ENCODE measurements at regions of chr12 and their contacts with region 1.

Region 1: GRCh38 chr12:55738123-55739024 is 4.5 kb upstream of the GDF11 start:
- DNase-seq: peak; percentile 89 to 94 (median 93)
- ATAC-seq: peak; percentile 83
- H3K4me3 ChIP-seq: peak overlapping the region; percentile 75
- H3K27ac ChIP-seq: peak overlapping the region; percentile 68
- H3K4me1 ChIP-seq: no peaks in the 10 kb centered on the region
- H3K27me3 ChIP-seq: no peaks in the 10 kb centered on the region

Region 2: GRCh38 chr12:55797068-55797467 is 58.7 kb after region 1 on chr12:
- intact Hi-C with region 1: loop called in 3 of 4 experiments (anchors 10 kb)
- DNase-seq: no peak
- ATAC-seq: peak in 1 of 2 donors; percentile 51
- H3K4me3 ChIP-seq: no peak overlapping the region
- H3K27ac ChIP-seq: no peak overlapping the region
- H3K4me1 ChIP-seq: peaks cover 1% of the 10 kb centered on the region
- H3K27me3 ChIP-seq: no peaks in the 10 kb centered on the region

Region 3: DNA sequence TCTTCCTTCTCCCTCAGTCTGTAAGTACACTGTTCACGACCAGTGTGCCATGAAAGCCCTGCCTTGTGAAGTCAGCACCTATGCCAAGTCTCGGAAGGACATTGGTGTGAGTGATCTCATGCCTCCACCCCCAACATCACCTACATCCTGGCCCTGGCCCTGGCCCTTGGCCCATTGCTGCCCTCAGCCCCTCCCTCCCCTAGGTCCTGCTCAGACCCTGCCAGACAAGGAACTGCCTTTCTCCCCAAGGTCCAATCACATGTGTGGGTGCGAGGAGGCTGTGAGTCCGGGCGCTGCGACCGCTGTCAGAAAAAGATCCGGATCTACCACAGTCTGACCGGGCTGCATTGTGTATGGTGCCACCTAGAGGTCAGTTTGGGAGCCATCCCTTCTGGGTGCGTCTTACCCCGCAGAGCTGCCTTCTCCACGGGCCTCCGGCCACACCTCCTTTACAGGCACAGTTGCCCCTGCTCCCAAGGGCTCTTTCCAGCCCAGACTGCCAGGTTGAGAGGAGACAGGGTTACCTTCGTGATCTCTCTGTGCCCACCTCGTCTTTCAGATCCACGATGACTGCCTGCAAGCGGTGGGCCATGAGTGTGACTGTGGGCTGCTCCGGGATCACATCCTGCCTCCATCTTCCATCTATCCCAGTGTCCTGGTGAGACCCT is 201.8 kb after region 1 on chr12:
- intact Hi-C with region 1: loop called in 3 of 4 experiments (anchors 2 to 5 kb)
- DNase-seq: peak; percentile 83 to 92 (median 90)
- ATAC-seq: peak; percentile 94
- H3K4me3 ChIP-seq: no peak overlapping the region
- H3K27ac ChIP-seq: no peak overlapping the region
- H3K4me1 ChIP-seq: no peaks in the 10 kb centered on the region
- H3K27me3 ChIP-seq: no peaks in the 10 kb centered on the region

Measured in right cardiac atrium (tissue), 5 donors.